Ovary (tissue), 10 donors: ENCODE measurements at regions of chr2 and their contacts with region 1.

Region 1: GRCh38 chr2:227632827-227633226 is 15.5 kb downstream of the SCYGR4 start:
- DNase-seq: no peak
- H3K4me3 ChIP-seq: no peak overlapping the region
- H3K27ac ChIP-seq: no peak overlapping the region
- H3K4me1 ChIP-seq: no peaks in the 10 kb centered on the region
- H3K27me3 ChIP-seq: no peaks in the 10 kb centered on the region
- CTCF ChIP-seq: no peak
- EP300 ChIP-seq: no peak
- POLR2A ChIP-seq: no peak

Region 2: GRCh38 chr2:227674331-227674882 is 41.6 kb after region 1 on chr2:
- intact Hi-C with region 1: loop called in 1 of 4 experiments (anchors 1 kb)
- DNase-seq: no peak
- H3K4me3 ChIP-seq: no peak overlapping the region
- H3K27ac ChIP-seq: no peak overlapping the region
- H3K4me1 ChIP-seq: no peaks in the 10 kb centered on the region
- H3K27me3 ChIP-seq: no peaks in the 10 kb centered on the region
- CTCF ChIP-seq: no peak
- EP300 ChIP-seq: no peak
- POLR2A ChIP-seq: no peak